ENCODE measurements at regions of chr12 and their contacts with region 1.

Region 1: GRCh38 chr12:104303538-104304151 is at the start of gene EID3:
- DNase-seq: no peak
- H3K4me3 ChIP-seq: peak within 1 kb of the TSS; percentile 13 to 65 (median 64)
- H3K27ac ChIP-seq: peak within 1 kb of the TSS; percentile 70
- H3K4me1 ChIP-seq: peaks cover 18% of the 10 kb centered on the region
- H3K27me3 ChIP-seq: no peaks in the 10 kb centered on the region
- CTCF ChIP-seq: no peak
- polyA plus RNA-seq, gene EID3: 0.75 to 1.8 TPM (median 1.2 TPM) in 3 replicates

Region 2: DNA sequence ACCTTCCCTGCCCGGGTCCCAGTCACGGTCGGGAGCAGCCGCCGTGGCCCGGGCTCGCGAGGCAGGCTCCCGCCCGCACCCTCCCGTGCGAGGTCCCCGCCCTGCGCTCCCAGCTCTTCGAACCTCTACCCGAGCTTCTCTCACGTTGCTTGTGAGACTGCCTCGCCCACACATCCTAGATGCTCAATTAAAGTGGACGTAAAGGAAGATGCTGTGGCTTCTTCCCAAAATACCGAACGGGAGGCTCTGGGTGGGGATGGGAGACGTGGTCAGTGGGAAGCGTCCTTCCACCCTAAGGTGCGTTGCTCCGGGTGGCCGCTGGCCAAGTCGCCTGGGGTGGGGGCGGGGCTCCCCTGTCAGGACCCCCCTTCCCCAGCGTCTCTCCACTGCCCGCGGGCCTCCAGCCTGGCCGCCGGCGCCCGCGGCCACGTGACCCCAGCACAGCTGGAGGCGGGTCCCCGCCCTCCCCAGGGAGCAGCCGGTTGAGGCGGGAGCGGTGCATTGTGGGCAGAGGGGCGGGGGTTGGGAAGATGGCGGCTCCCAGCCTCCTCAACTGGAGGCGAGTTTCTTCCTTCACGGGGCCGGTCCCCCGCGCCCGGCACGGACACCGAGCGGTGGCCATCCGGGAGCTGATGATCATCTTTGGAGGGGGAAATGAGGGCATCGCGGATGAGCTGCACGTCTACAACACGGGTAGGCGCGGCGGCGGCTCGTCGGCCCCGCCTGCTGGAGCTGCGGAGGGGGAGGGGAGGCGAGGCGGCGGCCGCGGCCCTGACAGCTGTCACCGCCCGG is 239.4 kb before region 1 on chr12 and contains the start of gene HCFC2:
- dilution Hi-C with region 1: no loop called
- DNase-seq: peak; percentile 26
- H3K4me3 ChIP-seq: peak within 1 kb of the TSS; percentile 84 to 93 (median 87)
- H3K27ac ChIP-seq: peak within 1 kb of the TSS; percentile 62
- H3K4me1 ChIP-seq: peaks cover 21% of the 10 kb centered on the region
- H3K27me3 ChIP-seq: no peaks in the 10 kb centered on the region
- CTCF ChIP-seq: no peak
- polyA plus RNA-seq, gene HCFC2: 5.3 to 8.4 TPM (median 8.3 TPM) in 3 replicates

Region 3: GRCh38 chr12:104215638-104216297 is 87.9 kb before region 1 on chr12 and contains the start of gene TXNRD1:
- dilution Hi-C with region 1: loop called (anchors 25 kb)
- DNase-seq: no peak
- H3K4me3 ChIP-seq: peak within 1 kb of the TSS; percentile 63 to 74 (median 73)
- H3K27ac ChIP-seq: peak within 1 kb of the TSS; percentile 76
- H3K4me1 ChIP-seq: peaks cover 22% of the 10 kb centered on the region
- H3K27me3 ChIP-seq: no peaks in the 10 kb centered on the region
- CTCF ChIP-seq: peak; percentile 69 to 89 (median 87)
- polyA plus RNA-seq, gene TXNRD1: 41.5 to 88.9 TPM (median 65.6 TPM) in 3 replicates